B cell (primary cell): ENCODE measurements at regions of chr5 and their contacts with region 1.

Region 1: DNA sequence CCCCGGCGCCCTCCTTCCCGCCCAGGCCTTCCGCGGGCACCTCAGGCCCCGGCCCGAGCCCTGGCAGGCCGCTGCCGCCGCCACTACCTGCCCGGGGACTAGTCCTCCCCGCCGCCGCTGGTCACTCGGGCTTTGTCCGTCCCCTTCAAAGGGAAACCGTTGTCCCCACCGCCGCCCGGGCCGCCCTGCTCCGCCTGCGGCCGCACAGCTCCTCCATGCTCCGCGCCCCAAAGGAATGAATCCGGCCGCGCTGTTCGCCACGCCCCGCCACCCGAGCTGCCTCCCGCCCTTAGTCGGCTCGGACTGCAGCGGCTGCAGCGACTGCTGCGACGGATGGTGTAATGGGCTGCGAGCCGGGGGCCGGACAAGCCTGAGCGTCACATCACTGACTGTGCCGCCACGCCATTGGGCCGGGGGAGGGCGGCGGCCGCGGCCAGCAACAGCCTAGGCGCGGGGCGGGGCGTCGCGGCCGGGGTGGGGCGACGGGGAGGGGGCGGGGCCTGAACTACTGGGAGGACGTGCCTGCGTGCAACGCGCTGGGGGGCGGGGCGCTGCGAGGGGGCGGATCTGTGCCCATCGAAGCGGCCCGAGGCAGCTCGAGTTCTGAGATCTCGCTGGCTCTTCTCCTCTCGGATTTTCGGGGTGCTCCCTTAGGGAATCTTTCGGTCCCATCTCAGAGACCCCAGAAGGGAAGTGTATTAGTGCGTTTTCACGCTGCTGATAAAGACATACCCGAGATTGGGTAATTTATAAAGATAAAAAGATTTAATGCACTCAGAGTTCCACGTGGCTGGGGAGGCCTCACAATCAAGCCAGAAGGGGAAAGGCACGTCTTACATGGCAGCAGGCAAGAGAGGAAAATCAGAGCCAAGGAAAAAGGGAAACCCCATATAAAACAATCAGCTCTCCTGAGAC is at the start of gene FEM1C:
- DNase-seq: peak; percentile 95
- ATAC-seq: peak; percentile 93
- H3K4me3 ChIP-seq: peak within 1 kb of the TSS; percentile 83 to 95 (median 86)
- H3K4me3 Mint-ChIP-seq: peak within 1 kb of the TSS; percentile 94
- H3K27ac ChIP-seq: peak within 1 kb of the TSS; percentile 91 to 98
- H3K27ac Mint-ChIP-seq: peak within 1 kb of the TSS; percentile 98
- H3K4me1 ChIP-seq: peaks cover 30 to 38% of the 10 kb centered on the region in 2 donors
- H3K4me1 Mint-ChIP-seq: peaks cover 42% of the 10 kb centered on the region
- H3K27me3 ChIP-seq: no peaks in the 10 kb centered on the region
- H3K27me3 Mint-ChIP-seq: no peaks in the 10 kb centered on the region
- CTCF ChIP-seq: no peak
- total RNA-seq, gene FEM1C: 18.2 and 18.7 TPM in 2 replicates

Region 2: DNA sequence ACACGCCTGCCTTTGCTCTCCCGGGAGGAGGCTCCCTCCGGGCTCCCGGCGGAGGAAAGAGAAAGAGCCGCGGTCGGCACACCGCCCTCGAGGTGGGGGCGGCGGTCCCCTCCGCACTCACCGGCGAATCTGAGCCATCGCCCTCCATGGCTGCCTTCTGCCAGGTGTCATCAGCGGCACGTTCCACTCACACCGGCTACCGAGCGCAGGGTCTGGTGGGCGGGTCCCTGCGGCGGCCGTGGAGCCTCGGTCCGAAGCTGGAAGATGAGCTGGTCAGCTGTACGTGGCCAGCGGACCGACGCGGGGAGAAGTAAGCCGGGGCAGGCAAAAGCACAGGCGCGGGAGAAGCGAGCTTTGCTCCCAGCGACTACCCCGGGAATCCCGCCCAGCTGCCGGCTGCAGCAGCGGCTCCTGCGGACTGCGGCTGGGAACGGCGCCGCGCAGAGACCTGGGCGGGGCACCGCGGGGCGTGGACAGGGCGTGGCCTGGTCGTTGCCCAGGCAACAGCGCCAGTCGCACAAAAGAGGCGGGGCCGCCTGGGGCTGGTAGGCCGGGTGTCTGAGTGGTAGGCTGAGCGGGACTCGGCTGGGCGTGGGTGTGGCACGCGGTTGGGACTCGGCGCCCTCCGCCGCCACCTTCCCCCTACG is 375.1 kb before region 1 on chr5 and contains the start of gene TRIM36:
- CTCF ChIA-PET with region 1: no interaction called
- POLR2A ChIA-PET with region 1: no interaction called
- intact Hi-C with region 1: loop called (anchors 2 kb)
- DNase-seq: peak; percentile 94
- ATAC-seq: peak; percentile 92
- H3K4me3 ChIP-seq: peak within 1 kb of the TSS; percentile 53 to 89 (median 75)
- H3K4me3 Mint-ChIP-seq: peak within 1 kb of the TSS; percentile 92
- H3K27ac ChIP-seq: no peak within 1 kb of the TSS
- H3K27ac Mint-ChIP-seq: peak within 1 kb of the TSS; percentile 80
- H3K4me1 ChIP-seq: peaks cover 20 to 21% of the 10 kb centered on the region in 2 donors
- H3K4me1 Mint-ChIP-seq: peaks cover 14% of the 10 kb centered on the region
- H3K27me3 ChIP-seq: peaks cover 0 to 62% (median 32%) of the 10 kb centered on the region in 4 experiments
- H3K27me3 Mint-ChIP-seq: peaks cover 59% of the 10 kb centered on the region
- CTCF ChIP-seq: no peak
- total RNA-seq, gene TRIM36: 0.39 and 1.6 TPM in 2 replicates

Region 3: DNA sequence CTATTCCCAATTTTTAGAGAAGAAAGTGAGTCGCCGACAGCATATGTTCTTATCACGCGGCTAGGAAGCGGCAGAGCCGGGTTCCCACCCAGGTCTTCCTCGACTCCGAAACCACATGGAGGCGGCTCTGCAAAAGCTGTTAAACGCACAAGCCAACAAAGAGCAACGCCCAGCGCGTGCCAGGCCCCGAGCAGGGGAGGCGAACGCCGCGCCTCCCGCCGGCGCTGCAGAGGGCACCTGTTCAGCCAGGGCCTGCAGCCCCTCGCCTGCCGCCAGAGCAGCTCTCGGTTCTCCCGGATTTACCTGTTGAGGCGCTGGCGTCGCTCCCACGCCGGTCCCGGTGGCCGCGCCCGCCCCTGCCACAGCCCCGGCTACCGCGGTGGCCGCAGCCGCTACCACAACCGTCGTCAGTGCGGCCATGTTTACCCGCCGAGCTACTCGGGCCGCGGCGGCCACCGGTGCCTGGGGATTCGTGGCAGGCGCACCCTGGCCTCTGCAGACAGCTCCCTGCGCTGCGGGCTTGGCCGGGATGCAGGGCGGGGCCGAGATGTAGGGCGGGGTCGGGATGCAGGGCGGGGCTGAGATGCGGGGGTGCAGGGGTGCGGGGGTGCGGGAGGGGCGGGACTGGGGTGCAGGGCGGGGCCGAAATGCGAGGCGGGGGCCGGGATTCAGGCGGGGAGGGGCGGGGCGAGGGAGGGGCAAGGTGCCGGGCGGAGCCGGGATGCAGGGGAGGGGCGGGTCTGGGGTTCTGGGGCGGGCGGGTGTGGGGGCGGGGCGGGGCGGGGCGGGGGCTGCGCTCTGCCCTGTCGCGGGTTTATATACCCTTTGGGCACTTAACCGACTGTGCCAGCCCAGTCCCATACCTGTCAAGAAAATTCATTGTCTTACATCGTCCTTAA is 248.3 kb before region 1 on chr5 and contains the start of gene CCDC112:
- CTCF ChIA-PET with region 1: interaction called, 4 read pairs
- POLR2A ChIA-PET with region 1: interaction called, 6 read pairs
- intact Hi-C with region 1: loop called (anchors 1 kb)
- DNase-seq: peak; percentile 82
- ATAC-seq: peak; percentile 86
- H3K4me3 ChIP-seq: peak within 1 kb of the TSS; percentile 53 to 78 (median 70)
- H3K4me3 Mint-ChIP-seq: peak within 1 kb of the TSS; percentile 86
- H3K27ac ChIP-seq: peak within 1 kb of the TSS in 1 of 2 donors; percentile 39
- H3K27ac Mint-ChIP-seq: peak within 1 kb of the TSS; percentile 16
- H3K4me1 ChIP-seq: peaks cover 7 to 13% of the 10 kb centered on the region in 2 donors
- H3K4me1 Mint-ChIP-seq: peaks cover 16% of the 10 kb centered on the region
- H3K27me3 ChIP-seq: no peaks in the 10 kb centered on the region
- H3K27me3 Mint-ChIP-seq: no peaks in the 10 kb centered on the region
- CTCF ChIP-seq: no peak
- total RNA-seq, gene CCDC112: 9.6 and 11.1 TPM in 2 replicates

Region 4: GRCh38 chr5:115586601-115587048 is 41.9 kb after region 1 on chr5:
- CTCF ChIA-PET with region 1: no interaction called
- POLR2A ChIA-PET with region 1: no interaction called
- intact Hi-C with region 1: loop called (anchors 2 kb)
- DNase-seq: peak; percentile 56
- ATAC-seq: peak; percentile 28
- H3K4me3 ChIP-seq: no peak overlapping the region
- H3K4me3 Mint-ChIP-seq: no peak overlapping the region
- H3K27ac ChIP-seq: no peak overlapping the region
- H3K27ac Mint-ChIP-seq: no peak overlapping the region
- H3K4me1 ChIP-seq: peaks cover 0 to 3% of the 10 kb centered on the region in 2 donors
- H3K4me1 Mint-ChIP-seq: peaks cover 2% of the 10 kb centered on the region
- H3K27me3 ChIP-seq: no peaks in the 10 kb centered on the region
- H3K27me3 Mint-ChIP-seq: no peaks in the 10 kb centered on the region
- CTCF ChIP-seq: peak; percentile 82

Region 5: DNA sequence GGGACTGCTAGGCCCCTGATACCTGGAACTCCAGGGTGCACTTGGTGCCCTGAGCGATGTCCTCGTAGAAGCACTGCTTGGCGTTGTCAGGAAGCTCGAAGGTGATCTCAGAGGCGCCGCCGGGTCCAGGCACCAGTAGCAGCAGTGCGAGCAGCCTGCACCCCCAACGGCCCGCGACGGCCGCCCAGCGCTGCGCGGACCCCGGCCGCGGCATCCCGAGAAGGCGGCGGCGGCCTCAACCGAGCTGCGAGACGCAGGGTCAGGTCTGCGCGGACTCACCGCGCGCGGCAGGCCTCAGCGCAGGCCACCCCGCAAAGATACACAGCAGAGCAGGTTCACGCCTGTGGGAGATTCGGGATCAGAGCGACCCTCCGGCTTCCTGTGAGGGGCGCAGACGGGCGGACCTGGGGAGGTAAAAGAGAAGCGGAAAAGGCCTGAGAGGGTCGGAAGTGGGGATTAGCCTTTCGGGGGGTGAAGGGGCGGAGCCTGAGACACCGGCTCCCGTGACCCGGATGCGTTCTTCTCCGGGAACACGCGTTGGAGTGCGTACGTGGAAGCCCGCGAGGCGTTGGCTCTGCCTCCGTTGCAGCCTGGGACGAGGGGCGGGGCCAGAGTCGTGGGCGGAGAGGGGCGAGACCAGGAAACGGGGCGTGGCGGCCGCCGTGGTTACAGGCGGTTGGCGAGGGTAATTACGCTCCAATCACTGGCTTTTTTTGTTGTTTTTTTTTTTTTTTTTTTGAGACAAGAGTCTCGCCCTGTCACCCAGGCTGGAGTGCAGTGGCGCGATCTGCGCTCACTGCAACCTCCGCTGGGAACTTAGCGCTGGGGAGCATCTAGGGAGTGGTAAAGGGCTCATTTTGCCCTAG is 81.1 kb after region 1 on chr5 and contains the start of gene TMED7:
- CTCF ChIA-PET with region 1: no interaction called
- POLR2A ChIA-PET with region 1: interaction called, 3 read pairs
- intact Hi-C with region 1: loop called (anchors 1 kb)
- DNase-seq: peak; percentile 99
- ATAC-seq: peak; percentile 92
- H3K4me3 ChIP-seq: peak within 1 kb of the TSS; percentile 67 to 92 (median 87)
- H3K4me3 Mint-ChIP-seq: no peak within 1 kb of the TSS
- H3K27ac ChIP-seq: peak within 1 kb of the TSS; percentile 88 to 96
- H3K27ac Mint-ChIP-seq: no peak within 1 kb of the TSS
- H3K4me1 ChIP-seq: peaks cover 32 to 35% of the 10 kb centered on the region in 2 donors
- H3K4me1 Mint-ChIP-seq: peaks cover 27% of the 10 kb centered on the region
- H3K27me3 ChIP-seq: peaks cover 0 to 5% (median 0%) of the 10 kb centered on the region in 4 experiments
- H3K27me3 Mint-ChIP-seq: no peaks in the 10 kb centered on the region
- CTCF ChIP-seq: no peak
- total RNA-seq, gene TMED7: 40.3 and 40.4 TPM in 2 replicates

Region 6: GRCh38 chr5:115649541-115649940 is 104.8 kb after region 1 on chr5:
- CTCF ChIA-PET with region 1: no interaction called
- POLR2A ChIA-PET with region 1: no interaction called
- intact Hi-C with region 1: no loop called
- DNase-seq: no peak
- ATAC-seq: no peak
- H3K4me3 ChIP-seq: no peak overlapping the region
- H3K4me3 Mint-ChIP-seq: no peak overlapping the region
- H3K27ac ChIP-seq: no peak overlapping the region
- H3K27ac Mint-ChIP-seq: no peak overlapping the region
- H3K4me1 ChIP-seq: no peaks in the 10 kb centered on the region
- H3K4me1 Mint-ChIP-seq: no peaks in the 10 kb centered on the region
- H3K27me3 ChIP-seq: peaks cover 0 to 9% (median 4%) of the 10 kb centered on the region in 4 experiments
- H3K27me3 Mint-ChIP-seq: peaks cover 27% of the 10 kb centered on the region
- CTCF ChIP-seq: no peak